ENCODE measurements at regions of chr5 and their contacts with region 1.

Region 1: GRCh38 chr5:55936100-55936693 is 58.6 kb downstream of the IL6ST start:
- DNase-seq: peak; percentile 88
- H3K4me3 ChIP-seq: no peak overlapping the region
- H3K27ac ChIP-seq: no peak overlapping the region
- H3K4me1 ChIP-seq: no peaks in the 10 kb centered on the region
- H3K27me3 ChIP-seq: no peaks in the 10 kb centered on the region
- CTCF ChIP-seq: peak; percentile 82 to 94
- POLR2A ChIP-seq: no peak

Region 2: DNA sequence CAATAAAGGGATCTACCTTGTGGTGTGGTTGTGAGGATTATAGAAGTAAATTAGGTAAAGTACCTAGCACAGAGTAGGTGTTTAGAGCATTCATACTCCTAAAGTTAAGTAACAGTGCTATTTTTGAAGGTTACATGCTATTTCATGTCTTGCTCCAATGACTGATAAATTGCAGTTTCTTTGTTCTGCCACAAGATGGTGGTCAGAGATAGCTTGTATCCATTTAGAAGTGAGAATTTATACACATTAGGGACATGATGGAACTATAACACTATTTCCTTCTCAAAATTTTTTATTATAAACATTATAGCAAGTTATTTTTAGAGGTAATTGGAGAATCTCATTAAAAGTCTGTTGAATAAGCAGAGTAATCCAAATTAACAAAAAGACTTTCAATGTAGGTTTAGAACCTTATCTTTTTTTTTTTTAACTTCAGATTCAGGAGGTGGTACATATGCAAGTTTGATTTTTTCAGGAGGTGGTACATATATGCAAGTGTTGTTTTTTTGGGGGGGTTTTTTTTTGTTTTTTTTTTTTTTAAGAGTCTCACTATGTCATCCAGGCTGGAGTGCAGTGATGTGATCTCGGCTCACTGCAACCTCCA is 611.3 kb before region 1 on chr5:
- CTCF ChIA-PET with region 1: interaction called, 17 read pairs
- POLR2A ChIA-PET with region 1: no interaction called
- dilution Hi-C with region 1: no loop called
- intact Hi-C with region 1: no loop called
- DNase-seq: peak; percentile 67
- H3K4me3 ChIP-seq: no peak overlapping the region
- H3K27ac ChIP-seq: no peak overlapping the region
- H3K4me1 ChIP-seq: no peaks in the 10 kb centered on the region
- H3K27me3 ChIP-seq: no peaks in the 10 kb centered on the region
- CTCF ChIP-seq: peak; percentile 43 to 47
- POLR2A ChIP-seq: no peak

Region 3: GRCh38 chr5:56264417-56265025 is 328.3 kb after region 1 on chr5:
- CTCF ChIA-PET with region 1: interaction called, 95 read pairs
- POLR2A ChIA-PET with region 1: no interaction called
- dilution Hi-C with region 1: no loop called
- intact Hi-C with region 1: loop called (anchors 1 kb)
- DNase-seq: no peak
- H3K4me3 ChIP-seq: no peak overlapping the region
- H3K27ac ChIP-seq: no peak overlapping the region
- H3K4me1 ChIP-seq: no peaks in the 10 kb centered on the region
- H3K27me3 ChIP-seq: no peaks in the 10 kb centered on the region
- CTCF ChIP-seq: peak; percentile 45 to 54
- POLR2A ChIP-seq: no peak

Measured in endothelial cell of umbilical vein (primary cell).